ENCODE measurements at regions of chr3 and their contacts with region 1.

Region 1: DNA sequence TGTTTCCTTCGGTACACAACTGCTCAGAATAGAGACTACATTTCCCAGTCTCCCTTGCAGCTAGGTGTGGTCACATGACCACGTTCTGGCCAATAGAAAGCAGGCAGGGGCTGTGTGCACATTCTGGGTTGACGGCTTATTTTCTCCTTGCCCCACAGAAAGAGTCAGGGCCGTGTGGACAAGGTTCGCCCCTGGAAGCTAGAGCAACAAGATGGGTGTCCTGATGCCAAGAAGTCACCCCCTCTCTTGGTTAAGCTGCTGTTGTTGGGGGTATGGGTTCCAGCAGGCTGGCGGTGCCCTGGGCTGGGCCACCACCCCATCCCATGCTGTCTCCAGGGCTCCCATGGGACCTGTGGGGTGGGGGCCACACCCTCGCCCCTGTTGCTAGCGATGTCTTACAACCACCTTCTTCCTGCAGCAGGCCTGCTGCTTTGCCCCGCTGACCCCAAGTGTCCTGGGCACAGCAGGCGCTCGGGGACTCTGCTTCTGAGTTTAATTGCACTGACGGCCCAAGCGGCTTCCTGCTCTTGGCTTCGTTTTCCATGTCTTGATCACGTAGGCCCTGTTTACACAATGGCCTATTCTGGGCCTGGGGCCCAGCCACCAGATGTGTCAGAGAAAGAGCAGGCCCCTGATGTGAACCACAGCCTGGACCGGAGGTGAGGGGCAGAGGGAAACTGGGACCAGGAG is 24.9 kb downstream of the ABTB1 start:
- DNase-seq: peak; percentile 62
- H3K4me3 ChIP-seq: peak overlapping the region in 1 of 4 donors; percentile 13
- H3K27ac ChIP-seq: peak overlapping the region; percentile 84 to 92 (median 90)
- H3K4me1 ChIP-seq: peaks cover 20 to 30% (median 26%) of the 10 kb centered on the region in 4 donors
- H3K27me3 ChIP-seq: no peaks in the 10 kb centered on the region
- CTCF ChIP-seq: no peak
- EP300 ChIP-seq: peak; percentile 45
- POLR2A ChIP-seq: no peak

Region 2: GRCh38 chr3:126355777-126356372 is 1341.8 kb before region 1 on chr3:
- in situ Hi-C with region 1: no loop called
- intact Hi-C with region 1: no loop called
- DNase-seq: peak; percentile 88
- H3K4me3 ChIP-seq: peak overlapping the region; percentile 61 to 89 (median 64)
- H3K27ac ChIP-seq: peak overlapping the region; percentile 76 to 88 (median 82)
- H3K4me1 ChIP-seq: peaks cover 0 to 30% (median 18%) of the 10 kb centered on the region in 4 donors
- H3K27me3 ChIP-seq: peaks cover 53% of the 10 kb centered on the region
- CTCF ChIP-seq: no peak
- EP300 ChIP-seq: peak; percentile 97
- POLR2A ChIP-seq: peak; percentile 56

Region 3: GRCh38 chr3:127831723-127832172 is 134.1 kb after region 1 on chr3:
- in situ Hi-C with region 1: loop called in 1 of 4 experiments (anchors 25 kb)
- intact Hi-C with region 1: no loop called
- DNase-seq: peak; percentile 74
- H3K4me3 ChIP-seq: no peak overlapping the region
- H3K27ac ChIP-seq: no peak overlapping the region
- H3K4me1 ChIP-seq: no peaks in the 10 kb centered on the region
- H3K27me3 ChIP-seq: no peaks in the 10 kb centered on the region
- CTCF ChIP-seq: peak; percentile 71 to 84 (median 80)
- EP300 ChIP-seq: no peak
- POLR2A ChIP-seq: no peak

Measured in transverse colon (tissue), 4 donors.